Activated CD4-positive, alpha-beta T cell treated with anti-CD3 and anti-CD28 coated beads for 36 hours (primary cell): ENCODE measurements at regions of chr3 and their contacts with region 1.

Region 1: GRCh38 chr3:136861890-136862616 is at the start of gene NCK1:
- DNase-seq: peak; percentile 99
- ATAC-seq: peak; percentile 99
- H3K4me3 Mint-ChIP-seq: peak within 1 kb of the TSS; percentile 96
- H3K27ac Mint-ChIP-seq: peak within 1 kb of the TSS; percentile 98
- H3K4me1 Mint-ChIP-seq: peaks cover 41% of the 10 kb centered on the region
- H3K27me3 Mint-ChIP-seq: no peaks in the 10 kb centered on the region
- total RNA-seq, gene NCK1: 30.4 to 31.9 TPM

Region 2: GRCh38 chr3:135965506-135966270 is 896.4 kb before region 1 on chr3 and contains the start of gene PPP2R3A:
- CTCF ChIA-PET with region 1: no interaction called
- POLR2A ChIA-PET with region 1: no interaction called
- intact Hi-C with region 1: loop called in 1 of 2 experiments (anchors 5 kb)
- DNase-seq: peak; percentile 85
- ATAC-seq: peak; percentile 93
- H3K4me3 Mint-ChIP-seq: peak within 1 kb of the TSS; percentile 65
- H3K27ac Mint-ChIP-seq: no peak within 1 kb of the TSS
- H3K4me1 Mint-ChIP-seq: peaks cover 11% of the 10 kb centered on the region
- H3K27me3 Mint-ChIP-seq: peaks cover 30% of the 10 kb centered on the region
- total RNA-seq, gene PPP2R3A: 0.18 to 0.51 TPM

Region 3: DNA sequence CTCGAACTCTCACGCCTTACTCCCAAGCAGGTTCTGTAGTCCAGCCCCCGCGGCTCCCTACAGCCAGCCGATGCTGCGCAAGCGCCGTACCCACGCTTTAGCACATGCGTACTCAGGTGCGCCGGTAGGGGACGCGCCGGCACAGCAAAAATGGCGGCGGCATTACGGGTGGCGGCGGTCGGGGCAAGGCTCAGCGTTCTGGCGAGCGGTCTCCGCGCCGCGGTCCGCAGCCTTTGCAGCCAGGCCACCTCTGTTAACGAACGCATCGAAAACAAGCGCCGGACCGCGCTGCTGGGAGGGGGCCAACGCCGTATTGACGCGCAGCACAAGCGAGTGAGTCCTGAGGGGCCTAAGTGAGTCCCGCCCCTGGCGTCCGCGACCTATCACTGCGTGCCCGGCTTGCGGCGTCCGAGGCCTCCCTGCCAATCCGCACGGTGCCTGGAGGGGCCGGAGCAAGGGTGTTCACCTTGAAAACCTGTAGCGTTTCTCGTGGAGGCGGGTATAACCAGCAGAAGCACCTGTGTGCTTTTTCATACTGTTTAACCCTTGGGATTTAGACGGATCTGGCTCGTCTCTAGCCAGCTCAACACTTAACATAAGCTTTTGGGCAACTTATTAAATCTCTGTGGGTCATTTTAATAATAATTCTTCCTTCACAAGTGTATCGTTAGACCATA is 611.7 kb before region 1 on chr3 and contains the start of gene PCCB:
- CTCF ChIA-PET with region 1: no interaction called
- POLR2A ChIA-PET with region 1: no interaction called
- intact Hi-C with region 1: loop called in 1 of 2 experiments (anchors 10 kb)
- DNase-seq: peak; percentile 96
- ATAC-seq: peak; percentile 99
- H3K4me3 Mint-ChIP-seq: peak within 1 kb of the TSS; percentile 83
- H3K27ac Mint-ChIP-seq: peak within 1 kb of the TSS; percentile 91
- H3K4me1 Mint-ChIP-seq: peaks cover 15% of the 10 kb centered on the region
- H3K27me3 Mint-ChIP-seq: no peaks in the 10 kb centered on the region
- total RNA-seq, gene PCCB: 45.3 to 51.8 TPM

Region 4: DNA sequence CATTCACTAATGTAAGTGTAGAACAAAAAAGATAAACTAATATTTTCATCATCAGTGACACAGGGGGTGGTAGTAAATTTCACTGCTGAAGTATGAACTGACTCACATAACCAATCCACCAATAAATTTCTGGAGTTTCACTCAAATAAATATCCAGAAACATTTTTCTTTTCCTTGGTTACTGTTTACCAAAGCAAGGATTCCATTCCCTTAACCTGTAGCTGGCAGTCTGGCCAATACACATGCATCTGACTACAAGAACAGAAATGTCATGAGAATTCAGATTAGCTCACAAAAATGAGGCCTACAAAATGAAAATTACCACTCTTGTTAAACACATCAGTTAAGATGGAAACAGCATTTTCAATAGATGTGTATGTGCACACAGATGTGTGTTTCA is 190.1 kb before region 1 on chr3:
- CTCF ChIA-PET with region 1: no interaction called
- POLR2A ChIA-PET with region 1: no interaction called
- intact Hi-C with region 1: no loop called
- DNase-seq: no peak
- ATAC-seq: no peak
- H3K4me3 Mint-ChIP-seq: no peak overlapping the region
- H3K27ac Mint-ChIP-seq: no peak overlapping the region
- H3K4me1 Mint-ChIP-seq: peaks cover 32% of the 10 kb centered on the region
- H3K27me3 Mint-ChIP-seq: no peaks in the 10 kb centered on the region

Region 5: DNA sequence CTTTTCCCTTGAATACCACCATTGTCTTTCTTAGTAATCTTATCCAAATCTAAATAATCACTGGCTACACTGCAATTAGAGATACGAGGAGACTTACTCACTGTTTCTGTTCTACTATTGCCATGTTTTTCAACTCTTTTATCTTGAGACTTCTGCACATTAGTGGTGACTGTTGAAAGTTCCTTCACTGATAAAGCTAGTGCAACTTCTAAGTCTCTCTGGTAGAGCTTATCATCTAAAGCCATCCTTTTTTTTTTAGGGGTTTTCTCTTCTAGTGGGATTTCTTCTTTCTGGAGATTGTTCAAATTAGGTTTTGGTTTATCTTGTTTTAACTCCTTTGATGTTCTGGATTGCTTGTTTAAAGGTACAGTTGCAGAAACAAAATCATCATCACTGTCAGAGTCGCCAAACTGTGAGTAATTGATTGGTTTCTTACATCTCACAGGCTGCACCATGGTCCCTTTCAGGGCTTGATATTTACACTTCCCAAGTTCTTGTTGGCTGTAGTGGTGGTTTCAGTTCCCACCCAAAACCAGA is 37.6 kb after region 1 on chr3:
- CTCF ChIA-PET with region 1: interaction called, 4 read pairs
- POLR2A ChIA-PET with region 1: interaction called, 4 read pairs
- intact Hi-C with region 1: loop called in 1 of 2 experiments (anchors 5 kb)
- DNase-seq: no peak
- ATAC-seq: peak; percentile 92
- H3K4me3 Mint-ChIP-seq: peak overlapping the region; percentile 3
- H3K27ac Mint-ChIP-seq: peak overlapping the region; percentile 49
- H3K4me1 Mint-ChIP-seq: peaks cover 56% of the 10 kb centered on the region
- H3K27me3 Mint-ChIP-seq: no peaks in the 10 kb centered on the region

Region 6: GRCh38 chr3:136938334-136938733 is 76.3 kb after region 1 on chr3:
- CTCF ChIA-PET with region 1: no interaction called
- POLR2A ChIA-PET with region 1: no interaction called
- intact Hi-C with region 1: loop called in 1 of 2 experiments (anchors 5 kb)
- DNase-seq: no peak
- ATAC-seq: peak; percentile 68
- H3K4me3 Mint-ChIP-seq: no peak overlapping the region
- H3K27ac Mint-ChIP-seq: peak overlapping the region; percentile 37
- H3K4me1 Mint-ChIP-seq: peaks cover 59% of the 10 kb centered on the region
- H3K27me3 Mint-ChIP-seq: no peaks in the 10 kb centered on the region

Region 7: DNA sequence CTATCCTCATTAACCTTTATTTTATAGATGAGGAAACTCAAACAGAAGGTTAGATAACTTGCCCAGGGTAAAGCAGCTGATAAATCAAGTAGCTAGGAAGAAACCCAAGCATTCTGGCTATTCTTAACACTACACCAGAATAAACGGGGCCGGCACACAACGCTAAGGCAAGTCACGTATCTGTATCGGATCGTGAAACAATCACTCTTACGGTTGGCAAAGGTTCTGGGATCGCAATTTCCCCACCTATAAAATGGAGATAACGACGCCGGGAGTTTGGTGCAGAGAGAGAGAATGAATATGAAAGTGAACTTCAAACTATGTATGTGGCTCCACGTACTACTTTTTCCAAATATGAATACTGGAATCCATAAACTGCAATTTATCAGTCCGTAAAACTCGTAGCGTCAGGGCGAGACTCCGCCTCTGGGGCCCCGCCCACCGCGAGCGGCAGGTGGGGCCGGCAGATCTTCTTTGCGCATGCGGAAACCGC is 1324.8 kb after region 1 on chr3:
- CTCF ChIA-PET with region 1: no interaction called
- POLR2A ChIA-PET with region 1: no interaction called
- intact Hi-C with region 1: loop called in 1 of 2 experiments (anchors 5 kb)
- DNase-seq: peak; percentile 94
- ATAC-seq: peak; percentile 96
- H3K4me3 Mint-ChIP-seq: peak overlapping the region; percentile 81
- H3K27ac Mint-ChIP-seq: peak overlapping the region; percentile 93
- H3K4me1 Mint-ChIP-seq: peaks cover 28% of the 10 kb centered on the region
- H3K27me3 Mint-ChIP-seq: peaks cover 3% of the 10 kb centered on the region